Ovary (tissue), 10 donors: ENCODE measurements at regions of chr3 and their contacts with region 1.

Region 1: DNA sequence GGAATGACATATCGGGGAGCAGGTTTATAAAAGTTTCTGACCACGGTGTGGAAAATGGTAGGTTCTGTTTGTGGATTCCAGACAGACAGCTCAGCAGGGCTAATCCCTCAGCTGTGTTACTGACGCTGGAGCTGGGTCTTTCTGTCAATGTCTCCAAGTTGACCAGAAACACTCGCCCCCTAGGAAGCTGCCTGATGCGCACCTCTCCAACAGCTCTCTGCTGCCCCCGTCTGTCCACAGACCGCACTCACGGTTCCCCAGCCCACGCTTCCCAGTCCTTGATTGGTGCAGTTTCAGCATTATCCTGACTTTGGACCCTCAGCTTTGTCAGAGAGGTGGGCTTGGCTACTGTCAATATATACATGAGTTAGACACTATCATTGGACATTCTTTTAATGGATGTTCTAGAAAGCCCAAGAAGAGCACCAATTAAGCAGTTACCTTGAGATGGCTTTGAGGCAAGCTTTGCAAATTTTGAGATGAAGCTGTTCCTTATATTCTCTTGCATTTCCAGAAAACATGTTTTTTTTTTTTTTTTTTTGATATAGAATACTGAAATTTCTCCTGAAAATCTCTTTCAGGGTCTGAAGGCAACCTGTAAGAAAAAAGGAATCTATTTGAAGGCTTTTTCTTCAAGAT is 98.9 kb upstream of the TBC1D5 start:
- DNase-seq: peak; percentile 44 to 81 (median 72)
- H3K4me3 ChIP-seq: no peak overlapping the region
- H3K27ac ChIP-seq: no peak overlapping the region
- H3K4me1 ChIP-seq: no peaks in the 10 kb centered on the region
- H3K27me3 ChIP-seq: no peaks in the 10 kb centered on the region
- CTCF ChIP-seq: peak; percentile 58 to 69 (median 64)
- EP300 ChIP-seq: no peak
- POLR2A ChIP-seq: no peak

Region 2: GRCh38 chr3:16600780-16601539 is 1240.3 kb before region 1 on chr3:
- intact Hi-C with region 1: loop called in 1 of 4 experiments (anchors 5 kb)
- DNase-seq: peak; percentile 72 to 88 (median 85)
- H3K4me3 ChIP-seq: no peak overlapping the region
- H3K27ac ChIP-seq: no peak overlapping the region
- H3K4me1 ChIP-seq: no peaks in the 10 kb centered on the region
- H3K27me3 ChIP-seq: no peaks in the 10 kb centered on the region
- CTCF ChIP-seq: peak; percentile 71 to 85 (median 83)
- EP300 ChIP-seq: no peak
- POLR2A ChIP-seq: no peak

Region 3: DNA sequence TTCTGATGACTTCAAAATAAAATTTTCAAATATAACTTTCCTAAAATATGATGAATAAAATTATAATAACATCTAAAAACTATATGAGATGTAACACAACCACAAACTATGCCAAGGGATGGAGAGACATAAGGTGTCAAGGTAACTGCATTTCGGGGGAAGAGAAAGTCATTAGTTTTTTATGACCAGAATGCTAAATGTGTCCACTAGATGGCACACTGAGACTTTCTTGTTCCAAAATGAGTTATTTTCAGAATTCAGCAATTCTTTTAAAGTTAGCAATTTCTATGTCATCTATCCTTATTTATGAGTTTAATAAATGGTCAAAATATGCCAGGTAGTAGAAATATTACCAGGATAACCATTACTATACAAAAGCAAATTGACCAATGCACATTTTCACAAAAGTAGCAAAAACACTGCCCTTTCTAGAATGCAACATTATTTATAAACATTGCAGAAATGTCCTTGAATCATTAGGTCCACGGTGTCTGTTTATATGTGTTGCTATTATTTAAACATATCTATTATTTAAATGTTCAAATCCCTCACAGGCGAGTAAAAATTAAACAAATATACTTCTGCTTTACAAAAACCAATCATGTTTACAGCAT is 582.4 kb before region 1 on chr3:
- intact Hi-C with region 1: loop called in 3 of 4 experiments (anchors 5 to 10 kb)
- DNase-seq: no peak
- H3K4me3 ChIP-seq: no peak overlapping the region
- H3K27ac ChIP-seq: no peak overlapping the region
- H3K4me1 ChIP-seq: no peaks in the 10 kb centered on the region
- H3K27me3 ChIP-seq: no peaks in the 10 kb centered on the region
- CTCF ChIP-seq: peak; percentile 39 to 61 (median 50)
- EP300 ChIP-seq: no peak
- POLR2A ChIP-seq: no peak

Region 4: GRCh38 chr3:17431004-17431403 is 410.3 kb before region 1 on chr3:
- intact Hi-C with region 1: loop called in 3 of 4 experiments (anchors 5 to 10 kb)
- DNase-seq: no peak
- H3K4me3 ChIP-seq: no peak overlapping the region
- H3K27ac ChIP-seq: no peak overlapping the region
- H3K4me1 ChIP-seq: peaks cover 1% of the 10 kb centered on the region
- H3K27me3 ChIP-seq: no peaks in the 10 kb centered on the region
- CTCF ChIP-seq: peak in 2 of 3 donors; percentile 16 to 22
- EP300 ChIP-seq: no peak
- POLR2A ChIP-seq: no peak

Region 5: GRCh38 chr3:17874632-17875031 is 33.3 kb after region 1 on chr3:
- intact Hi-C with region 1: no loop called
- DNase-seq: no peak
- H3K4me3 ChIP-seq: no peak overlapping the region
- H3K27ac ChIP-seq: no peak overlapping the region
- H3K4me1 ChIP-seq: no peaks in the 10 kb centered on the region
- H3K27me3 ChIP-seq: no peaks in the 10 kb centered on the region
- CTCF ChIP-seq: no peak
- EP300 ChIP-seq: no peak
- POLR2A ChIP-seq: no peak